Caco-2 (cell line): ENCODE measurements at regions of chr12 and their contacts with region 1.

Region 1: DNA sequence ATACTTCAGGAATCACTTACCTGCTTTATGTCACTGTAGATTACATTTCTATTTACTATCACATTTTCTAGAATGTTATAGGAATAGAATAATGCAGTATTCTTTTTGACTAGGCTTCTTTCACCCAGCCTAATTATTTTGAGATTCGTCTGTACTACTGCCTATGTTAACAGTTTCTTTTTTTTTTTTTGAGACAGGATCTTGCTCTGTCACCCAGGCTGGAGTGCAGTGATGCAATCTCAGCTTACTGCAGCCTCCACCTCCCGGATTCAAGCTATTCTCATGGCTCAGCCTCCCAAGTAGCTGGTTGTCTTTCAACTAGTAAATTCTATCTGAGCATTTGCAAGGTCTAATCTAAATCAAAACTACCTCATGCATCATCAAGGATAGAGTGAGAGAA is 6.4 kb downstream of the OR6C6 start:
- DNase-seq: no peak
- H3K4me3 ChIP-seq: no peak overlapping the region
- H3K4me3 Mint-ChIP-seq: no peak overlapping the region
- H3K27ac Mint-ChIP-seq: no peak overlapping the region
- H3K4me1 ChIP-seq: no peaks in the 10 kb centered on the region
- H3K4me1 Mint-ChIP-seq: no peaks in the 10 kb centered on the region
- H3K27me3 ChIP-seq: no peaks in the 10 kb centered on the region
- H3K27me3 Mint-ChIP-seq: peaks cover 2% of the 10 kb centered on the region
- CTCF ChIP-seq: no peak

Region 2: GRCh38 chr12:55229356-55229755 is 60.6 kb before region 1 on chr12:
- CTCF ChIA-PET with region 1: no interaction called
- POLR2A ChIA-PET with region 1: no interaction called
- intact Hi-C with region 1: no loop called
- DNase-seq: no peak
- H3K4me3 ChIP-seq: no peak overlapping the region
- H3K4me3 Mint-ChIP-seq: no peak overlapping the region
- H3K27ac Mint-ChIP-seq: no peak overlapping the region
- H3K4me1 ChIP-seq: no peaks in the 10 kb centered on the region
- H3K4me1 Mint-ChIP-seq: no peaks in the 10 kb centered on the region
- H3K27me3 ChIP-seq: no peaks in the 10 kb centered on the region
- H3K27me3 Mint-ChIP-seq: peaks cover 13% of the 10 kb centered on the region
- CTCF ChIP-seq: no peak

Region 3: GRCh38 chr12:55336002-55336401 is 46.0 kb after region 1 on chr12:
- CTCF ChIA-PET with region 1: no interaction called
- POLR2A ChIA-PET with region 1: no interaction called
- intact Hi-C with region 1: loop called (anchors 2 kb)
- DNase-seq: no peak
- H3K4me3 ChIP-seq: no peak overlapping the region
- H3K4me3 Mint-ChIP-seq: no peak overlapping the region
- H3K27ac Mint-ChIP-seq: no peak overlapping the region
- H3K4me1 ChIP-seq: peaks cover 35% of the 10 kb centered on the region
- H3K4me1 Mint-ChIP-seq: peaks cover 11% of the 10 kb centered on the region
- H3K27me3 ChIP-seq: no peaks in the 10 kb centered on the region
- H3K27me3 Mint-ChIP-seq: no peaks in the 10 kb centered on the region
- CTCF ChIP-seq: no peak